Activated naive CD4-positive, alpha-beta T cell treated with anti-CD3 and anti-CD28 coated beads for 36 hours (primary cell): ENCODE measurements at regions of chr12 and their contacts with region 1.

Region 1: GRCh38 chr12:55926738-55927587 is 731 bp downstream of the PYM1 start:
- DNase-seq: peak; percentile 96
- H3K4me3 Mint-ChIP-seq: peak overlapping the region; percentile 99
- H3K27ac Mint-ChIP-seq: peak overlapping the region; percentile 100
- H3K4me1 Mint-ChIP-seq: peaks cover 44% of the 10 kb centered on the region
- H3K27me3 Mint-ChIP-seq: no peaks in the 10 kb centered on the region

Region 2: GRCh38 chr12:55642669-55643068 is 284.3 kb before region 1 on chr12:
- CTCF ChIA-PET with region 1: no interaction called
- intact Hi-C with region 1: loop called (anchors 5 kb)
- DNase-seq: peak; percentile 67
- H3K4me3 Mint-ChIP-seq: no peak overlapping the region
- H3K27ac Mint-ChIP-seq: no peak overlapping the region
- H3K4me1 Mint-ChIP-seq: peaks cover 25% of the 10 kb centered on the region
- H3K27me3 Mint-ChIP-seq: peaks cover 2% of the 10 kb centered on the region

Region 3: DNA sequence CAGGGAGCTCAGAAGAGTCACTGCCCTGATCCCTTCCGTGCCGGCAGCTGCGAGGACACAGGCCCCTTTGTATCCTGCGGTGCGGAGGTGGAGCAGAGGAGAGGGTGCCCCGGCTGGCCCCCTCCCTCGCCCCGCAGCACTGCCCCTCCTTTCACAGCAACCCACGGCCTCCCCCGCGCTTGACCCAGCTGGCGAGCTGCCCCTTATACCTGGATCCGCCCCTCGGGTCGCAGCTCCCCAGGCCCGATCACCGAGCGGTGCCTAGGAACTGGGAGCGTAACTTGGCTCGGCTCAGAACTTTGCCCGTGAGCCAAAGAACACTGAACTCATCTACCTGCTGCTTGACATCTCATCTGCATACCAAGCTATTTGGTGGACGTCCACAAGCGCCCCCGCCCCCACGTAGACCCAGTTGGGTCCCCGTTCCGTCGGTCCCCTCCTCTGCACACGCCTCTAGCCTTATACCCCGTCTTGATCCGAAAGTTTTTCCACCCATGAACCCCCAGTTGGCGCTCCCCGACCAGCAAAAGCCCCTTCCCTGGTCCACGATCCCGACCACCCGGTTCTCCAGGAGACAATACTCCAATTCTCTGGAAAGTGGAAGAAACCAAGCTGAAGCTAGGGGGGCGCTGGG is 96.9 kb before region 1 on chr12:
- CTCF ChIA-PET with region 1: interaction called, 10 read pairs
- intact Hi-C with region 1: loop called (anchors 1 kb)
- DNase-seq: peak; percentile 24
- H3K4me3 Mint-ChIP-seq: peak overlapping the region; percentile 96
- H3K27ac Mint-ChIP-seq: peak overlapping the region; percentile 87
- H3K4me1 Mint-ChIP-seq: peaks cover 52% of the 10 kb centered on the region
- H3K27me3 Mint-ChIP-seq: no peaks in the 10 kb centered on the region

Region 4: GRCh38 chr12:55966408-55967281 is 39.7 kb after region 1 on chr12 and contains the start of gene CDK2:
- CTCF ChIA-PET with region 1: interaction called, 3 read pairs
- intact Hi-C with region 1: loop called (anchors 1 kb)
- DNase-seq: peak; percentile 95
- H3K4me3 Mint-ChIP-seq: peak within 1 kb of the TSS; percentile 97
- H3K27ac Mint-ChIP-seq: peak within 1 kb of the TSS; percentile 90
- H3K4me1 Mint-ChIP-seq: peaks cover 31% of the 10 kb centered on the region
- H3K27me3 Mint-ChIP-seq: no peaks in the 10 kb centered on the region
- total RNA-seq, gene CDK2: 121 to 126 TPM

Region 5: DNA sequence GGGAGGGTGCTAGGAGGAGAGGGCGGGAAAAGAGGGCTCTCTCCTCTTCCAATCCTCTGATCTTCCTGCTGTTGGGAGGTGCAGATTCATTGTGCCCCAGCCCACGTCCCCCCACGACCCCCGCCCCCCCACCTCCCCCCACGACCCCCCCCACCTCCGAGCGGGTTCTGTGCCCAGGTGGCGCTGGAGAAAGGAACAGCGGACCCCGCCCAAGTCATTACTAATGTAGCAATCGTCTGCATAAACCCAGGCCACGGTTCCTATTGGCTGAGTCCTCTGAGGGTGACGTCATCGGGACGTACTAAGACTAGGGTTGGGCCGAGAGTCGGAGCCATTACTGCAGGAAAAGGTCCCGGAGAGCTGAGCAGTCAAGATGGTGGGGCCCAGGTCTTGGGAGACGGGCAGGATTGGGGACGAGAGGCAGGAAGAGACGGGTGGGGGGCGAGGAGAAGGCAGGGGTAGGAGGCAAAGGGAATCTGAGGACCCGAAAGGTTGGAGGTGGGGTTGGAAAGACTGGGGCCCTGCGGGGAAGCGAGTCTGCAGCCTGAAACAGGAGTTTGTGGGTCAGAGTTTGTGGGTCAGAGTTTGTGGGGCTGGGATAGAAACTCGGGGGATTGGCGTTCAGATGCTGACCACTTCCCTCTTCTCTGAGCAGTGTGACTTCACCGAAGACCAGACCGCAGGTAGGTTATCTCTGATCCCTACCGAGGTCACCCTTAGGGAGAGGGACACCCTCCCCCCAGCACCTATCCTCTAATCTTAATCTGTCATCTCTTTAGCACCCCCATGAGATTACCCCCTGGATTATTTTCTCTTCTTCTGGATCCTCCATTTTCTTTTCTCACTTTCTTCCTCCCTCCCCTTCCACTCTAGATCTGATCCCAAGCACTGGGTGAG is 231.3 kb after region 1 on chr12 and contains the start of gene MYL6:
- CTCF ChIA-PET with region 1: no interaction called
- intact Hi-C with region 1: loop called (anchors 2 kb)
- DNase-seq: peak; percentile 98
- H3K4me3 Mint-ChIP-seq: peak within 1 kb of the TSS; percentile 96
- H3K27ac Mint-ChIP-seq: peak within 1 kb of the TSS; percentile 95
- H3K4me1 Mint-ChIP-seq: peaks cover 42% of the 10 kb centered on the region
- H3K27me3 Mint-ChIP-seq: no peaks in the 10 kb centered on the region
- total RNA-seq, gene MYL6: 841 to 868 TPM

Region 6: GRCh38 chr12:56630160-56630632 is 703.2 kb after region 1 on chr12 and contains the start of gene BAZ2A:
- CTCF ChIA-PET with region 1: no interaction called
- intact Hi-C with region 1: loop called (anchors 2 kb)
- DNase-seq: peak; percentile 93
- H3K4me3 Mint-ChIP-seq: peak within 1 kb of the TSS; percentile 98
- H3K27ac Mint-ChIP-seq: peak within 1 kb of the TSS; percentile 94
- H3K4me1 Mint-ChIP-seq: peaks cover 79% of the 10 kb centered on the region
- H3K27me3 Mint-ChIP-seq: no peaks in the 10 kb centered on the region
- total RNA-seq, gene BAZ2A: 78.3 to 80.0 TPM